HEK293 (cell line): ENCODE measurements at regions of chr12 and their contacts with region 1.

Region 1: GRCh38 chr12:7583571-7583970 is 80.0 kb upstream of the CD163 start:
- H3K4me3 ChIP-seq: no peak overlapping the region
- H3K27ac ChIP-seq: no peak overlapping the region; the same call in 1 of the 2 replicates
- H3K4me1 ChIP-seq: no peaks in the 10 kb centered on the region
- CTCF ChIP-seq: no peak

Region 2: DNA sequence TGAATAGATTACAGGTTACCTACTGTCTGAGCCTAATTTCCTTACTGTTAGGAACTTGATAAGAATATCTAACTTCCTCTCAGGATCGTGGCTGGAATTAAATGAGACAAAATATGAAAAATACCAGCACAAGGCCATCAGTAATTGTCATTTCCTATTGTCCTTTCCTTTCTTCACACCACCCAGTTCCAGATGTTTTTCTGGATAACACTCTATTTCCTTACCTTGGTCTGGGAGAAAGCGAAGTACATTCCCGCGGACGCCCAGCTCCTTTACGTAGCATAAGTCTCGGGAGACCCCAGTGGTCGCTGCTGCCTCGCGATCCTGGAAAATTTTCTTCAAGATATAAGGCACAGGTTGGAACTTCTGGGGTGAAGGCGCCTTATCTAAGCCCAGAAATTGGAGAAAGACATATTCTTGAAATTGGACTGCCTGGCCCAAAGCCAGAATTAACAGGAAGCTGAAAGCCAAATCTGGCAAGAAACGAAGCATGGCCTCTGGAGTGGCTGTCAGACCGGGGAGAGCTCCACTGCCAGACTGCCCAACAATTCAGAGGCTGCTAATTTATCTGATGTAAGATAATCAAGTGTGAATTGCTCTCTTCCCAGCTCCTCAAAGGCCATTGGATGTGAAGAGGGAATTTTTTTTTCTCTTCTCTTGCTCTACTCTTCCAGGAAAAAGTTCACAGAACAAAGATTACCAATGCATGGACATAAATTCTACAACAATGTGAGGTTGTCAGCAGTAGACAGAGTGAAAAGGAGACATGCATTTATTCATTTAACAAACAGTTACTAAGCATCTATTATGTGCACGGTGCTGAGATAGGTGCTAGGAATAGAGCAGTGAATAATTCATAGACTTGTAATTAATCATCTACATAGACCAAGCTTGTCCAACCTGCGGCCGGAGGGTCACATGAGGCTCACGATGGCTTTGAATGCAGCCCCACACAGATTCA is 111.9 kb after region 1 on chr12 and contains the start of gene GDF3:
- CTCF ChIA-PET with region 1: no interaction called
- POLR2A ChIA-PET with region 1: no interaction called
- H3K4me3 ChIP-seq: no peak within 1 kb of the TSS
- H3K27ac ChIP-seq: no peak within 1 kb of the TSS
- H3K4me1 ChIP-seq: peaks cover 5% of the 10 kb centered on the region
- CTCF ChIP-seq: no peak

Region 3: DNA sequence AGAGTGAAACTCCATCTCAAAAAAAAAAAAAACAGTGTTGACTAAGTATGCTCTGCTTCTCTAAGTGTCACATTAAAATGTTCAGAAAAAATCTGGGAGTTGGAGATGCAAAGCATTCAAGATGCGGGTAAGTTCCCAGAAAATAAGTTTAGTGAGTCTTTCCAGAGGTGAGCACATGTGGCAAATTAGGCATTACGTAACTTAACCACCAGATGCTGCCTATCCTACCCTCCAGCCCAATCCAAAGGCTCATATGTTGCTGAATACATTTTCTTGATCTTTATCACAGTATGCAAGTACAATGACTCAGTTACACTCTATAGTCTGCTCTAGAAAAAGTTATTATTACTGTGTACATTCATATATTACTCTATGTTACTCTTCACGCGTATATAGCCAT is 285.6 kb after region 1 on chr12:
- CTCF ChIA-PET with region 1: no interaction called
- POLR2A ChIA-PET with region 1: interaction called, 12 read pairs
- H3K4me3 ChIP-seq: no peak overlapping the region
- H3K27ac ChIP-seq: no peak overlapping the region
- H3K4me1 ChIP-seq: 0 out of 2 replicates have a peak, but pooled peaks cover 3% of the 10 kb centered on the region
- CTCF ChIP-seq: no peak